ENCODE measurements at regions of chr7 and their contacts with region 1.

Region 1: GRCh38 chr7:92916674-92917224 is 80.4 kb upstream of the CDK6 start:
- DNase-seq: peak in 1 of 3 donors; percentile 43
- ATAC-seq: no peak
- H3K4me3 ChIP-seq: no peak overlapping the region
- H3K27ac ChIP-seq: no peak overlapping the region
- H3K4me1 ChIP-seq: no peaks in the 10 kb centered on the region
- H3K27me3 ChIP-seq: no peaks in the 10 kb centered on the region

Region 2: DNA sequence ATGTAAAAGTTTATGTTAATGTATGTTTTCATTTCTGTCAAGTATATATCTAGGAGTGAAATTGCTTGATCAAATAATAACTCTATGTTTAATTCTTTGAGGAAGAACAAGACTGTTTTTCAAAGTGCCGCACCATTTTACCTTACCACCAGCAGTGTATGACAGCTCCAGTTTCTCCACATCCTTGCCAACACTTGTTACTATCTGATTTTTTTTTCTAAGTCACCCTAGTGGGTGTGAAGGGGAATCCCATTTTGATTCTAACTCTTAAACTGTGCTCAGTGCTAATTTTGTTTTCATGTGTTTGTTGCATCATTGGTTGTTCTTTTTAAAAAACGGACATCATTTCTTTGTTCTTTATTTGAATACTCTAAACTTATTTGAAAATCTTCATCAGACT is 39.8 kb after region 1 on chr7:
- intact Hi-C with region 1: loop called in 1 of 4 experiments (anchors 2 kb)
- DNase-seq: no peak
- ATAC-seq: no peak
- H3K4me3 ChIP-seq: no peak overlapping the region
- H3K27ac ChIP-seq: no peak overlapping the region
- H3K4me1 ChIP-seq: no peaks in the 10 kb centered on the region
- H3K27me3 ChIP-seq: no peaks in the 10 kb centered on the region

Region 3: GRCh38 chr7:93092757-93093370 is 176.1 kb after region 1 on chr7:
- intact Hi-C with region 1: no loop called
- DNase-seq: no peak
- ATAC-seq: no peak
- H3K4me3 ChIP-seq: no peak overlapping the region
- H3K27ac ChIP-seq: no peak overlapping the region
- H3K4me1 ChIP-seq: no peaks in the 10 kb centered on the region
- H3K27me3 ChIP-seq: no peaks in the 10 kb centered on the region

Region 4: GRCh38 chr7:93298671-93299070 is 381.9 kb after region 1 on chr7:
- intact Hi-C with region 1: no loop called
- DNase-seq: no peak
- ATAC-seq: no peak
- H3K4me3 ChIP-seq: no peak overlapping the region
- H3K27ac ChIP-seq: no peak overlapping the region
- H3K4me1 ChIP-seq: no peaks in the 10 kb centered on the region
- H3K27me3 ChIP-seq: no peaks in the 10 kb centered on the region

Measured in right cardiac atrium (tissue), 5 donors.